Ascending aorta (tissue), 2 donors: ENCODE measurements at regions of chr17 and their contacts with region 1.

Region 1: DNA sequence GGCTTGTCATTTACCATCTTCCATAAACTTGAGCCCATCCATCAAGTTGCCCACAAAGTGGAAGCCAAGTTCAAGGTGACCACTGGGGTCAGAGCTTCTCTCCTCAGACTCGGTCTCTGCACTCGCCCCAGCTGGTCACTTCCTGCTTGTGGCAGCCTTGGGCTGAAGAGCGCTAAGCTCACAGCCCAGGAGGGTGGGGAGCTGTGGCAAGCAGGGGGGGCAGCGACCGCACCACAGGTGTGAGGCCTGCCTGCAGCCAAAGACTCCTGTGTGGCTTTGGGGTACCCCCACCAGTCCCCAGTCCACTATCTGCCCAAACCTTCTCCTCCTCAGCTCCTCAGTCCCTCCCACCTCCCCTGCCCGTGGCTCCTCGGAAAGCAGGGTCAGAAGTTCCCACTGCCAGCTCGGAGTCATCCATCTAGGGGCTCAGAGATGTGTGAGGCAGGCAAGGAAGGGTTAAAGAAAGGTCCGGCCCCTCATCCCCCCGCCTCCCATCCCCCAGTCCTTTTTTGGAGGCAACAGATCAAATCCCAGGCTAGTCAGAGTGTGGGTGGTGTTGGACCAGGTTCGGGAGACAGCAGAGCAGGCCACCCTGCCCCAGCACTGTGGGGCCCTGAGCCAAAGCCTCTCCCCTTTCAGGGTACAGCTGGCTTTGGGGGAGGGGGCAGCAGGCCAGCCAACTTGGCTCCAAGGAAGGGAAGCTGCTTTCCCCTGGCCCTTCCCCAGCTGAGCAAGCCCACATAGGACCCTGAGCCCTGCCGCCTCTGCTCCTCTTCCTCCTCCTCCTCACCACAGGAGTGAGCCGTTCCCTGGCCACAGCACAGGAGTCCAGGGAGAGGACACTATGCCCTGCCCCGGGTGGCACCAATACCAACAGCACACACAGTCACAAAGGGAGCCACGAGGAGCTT is 3.2 kb downstream of the CSF3 start:
- DNase-seq: no peak
- H3K4me3 ChIP-seq: no peak overlapping the region
- H3K27ac ChIP-seq: peak overlapping the region; percentile 44 to 63
- H3K4me1 ChIP-seq: peaks cover 0 to 21% of the 10 kb centered on the region in 2 donors
- H3K27me3 ChIP-seq: no peaks in the 10 kb centered on the region
- CTCF ChIP-seq: no peak

Region 2: DNA sequence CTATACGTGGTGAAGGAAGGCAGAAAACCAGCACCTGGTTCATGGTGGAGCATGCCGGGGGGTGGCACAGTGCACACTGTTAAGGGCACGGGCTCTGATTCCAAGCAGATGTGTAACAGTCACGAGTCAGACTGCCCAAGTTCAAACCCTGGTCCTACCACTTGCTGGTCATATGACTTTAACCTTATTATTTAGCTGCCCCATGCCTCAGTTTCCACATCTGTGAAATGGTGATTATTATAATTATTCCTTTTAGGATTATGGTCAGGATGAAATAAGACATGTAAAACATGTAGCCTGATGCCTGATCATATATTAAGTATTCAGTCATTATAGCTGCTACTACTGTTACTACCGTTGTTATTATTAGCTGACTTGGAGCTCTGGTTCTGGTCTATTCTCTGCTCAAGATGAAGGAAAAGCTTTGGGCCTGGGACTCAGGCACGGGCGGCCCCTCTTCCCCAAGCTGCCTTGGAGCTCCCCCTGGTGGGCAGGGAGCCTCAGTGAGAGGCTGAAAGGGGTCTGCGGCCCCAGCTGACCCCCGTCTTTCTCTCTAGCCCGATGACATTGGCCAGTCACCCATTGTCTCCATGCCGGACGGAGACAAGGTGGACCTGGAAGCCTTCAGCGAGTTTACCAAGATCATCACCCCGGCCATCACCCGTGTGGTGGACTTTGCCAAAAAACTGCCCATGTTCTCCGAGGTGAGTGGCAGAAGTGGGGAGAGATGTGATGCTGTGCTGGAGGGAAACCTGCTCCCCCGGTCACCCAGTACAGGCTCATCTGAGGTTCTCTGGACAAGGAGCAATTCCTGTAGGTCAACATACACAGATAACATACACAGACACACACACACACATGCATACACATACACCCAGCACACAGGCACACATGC is 67.9 kb after region 1 on chr17:
- intact Hi-C with region 1: loop called (anchors 5 kb)
- DNase-seq: no peak
- H3K4me3 ChIP-seq: no peak overlapping the region
- H3K27ac ChIP-seq: peak overlapping the region; percentile 26 to 38
- H3K4me1 ChIP-seq: peaks cover 0 to 16% of the 10 kb centered on the region in 2 donors
- H3K27me3 ChIP-seq: no peaks in the 10 kb centered on the region
- CTCF ChIP-seq: peak; percentile 81 to 86 (median 82)

Region 3: GRCh38 chr17:40168262-40168832 is 149.9 kb after region 1 on chr17:
- intact Hi-C with region 1: loop called (anchors 1 kb)
- DNase-seq: no peak
- H3K4me3 ChIP-seq: no peak overlapping the region
- H3K27ac ChIP-seq: peak overlapping the region in 1 of 2 donors; percentile 56
- H3K4me1 ChIP-seq: no peaks in the 10 kb centered on the region
- H3K27me3 ChIP-seq: no peaks in the 10 kb centered on the region
- CTCF ChIP-seq: peak; percentile 73 to 87 (median 83)

Region 4: GRCh38 chr17:40191237-40192208 is 173.1 kb after region 1 on chr17:
- intact Hi-C with region 1: loop called (anchors 2 kb)
- DNase-seq: peak; percentile 31 to 87
- H3K4me3 ChIP-seq: peak overlapping the region; percentile 57 to 64
- H3K27ac ChIP-seq: peak overlapping the region in 1 of 2 donors; percentile 41
- H3K4me1 ChIP-seq: peaks cover 0 to 6% of the 10 kb centered on the region in 2 donors
- H3K27me3 ChIP-seq: no peaks in the 10 kb centered on the region
- CTCF ChIP-seq: peak; percentile 58 to 65 (median 61)

Region 5: GRCh38 chr17:40287494-40288369 is 269.3 kb after region 1 on chr17 and contains the start of gene CDC6:
- intact Hi-C with region 1: loop called (anchors 2 kb)
- DNase-seq: peak; percentile 96 to 99
- H3K4me3 ChIP-seq: peak within 1 kb of the TSS; percentile 57 to 58
- H3K27ac ChIP-seq: peak within 1 kb of the TSS in 1 of 2 donors; percentile 27
- H3K4me1 ChIP-seq: peaks cover 0 to 8% of the 10 kb centered on the region in 2 donors
- H3K27me3 ChIP-seq: no peaks in the 10 kb centered on the region
- CTCF ChIP-seq: no peak
- total RNA-seq, gene CDC6: 1.2 TPM